ENCODE measurements at regions of chr6 and their contacts with region 1.

Region 1: GRCh38 chr6:151014404-151015100 is 149.1 kb downstream of the MTHFD1L start:
- DNase-seq: peak; percentile 63 to 69
- ATAC-seq: peak; percentile 96

Region 2: GRCh38 chr6:150891888-150892485 is 122.6 kb before region 1 on chr6:
- intact Hi-C with region 1: loop called in 1 of 2 experiments (anchors 10 kb)
- DNase-seq: peak; percentile 31 to 72
- ATAC-seq: peak; percentile 71

Region 3: DNA sequence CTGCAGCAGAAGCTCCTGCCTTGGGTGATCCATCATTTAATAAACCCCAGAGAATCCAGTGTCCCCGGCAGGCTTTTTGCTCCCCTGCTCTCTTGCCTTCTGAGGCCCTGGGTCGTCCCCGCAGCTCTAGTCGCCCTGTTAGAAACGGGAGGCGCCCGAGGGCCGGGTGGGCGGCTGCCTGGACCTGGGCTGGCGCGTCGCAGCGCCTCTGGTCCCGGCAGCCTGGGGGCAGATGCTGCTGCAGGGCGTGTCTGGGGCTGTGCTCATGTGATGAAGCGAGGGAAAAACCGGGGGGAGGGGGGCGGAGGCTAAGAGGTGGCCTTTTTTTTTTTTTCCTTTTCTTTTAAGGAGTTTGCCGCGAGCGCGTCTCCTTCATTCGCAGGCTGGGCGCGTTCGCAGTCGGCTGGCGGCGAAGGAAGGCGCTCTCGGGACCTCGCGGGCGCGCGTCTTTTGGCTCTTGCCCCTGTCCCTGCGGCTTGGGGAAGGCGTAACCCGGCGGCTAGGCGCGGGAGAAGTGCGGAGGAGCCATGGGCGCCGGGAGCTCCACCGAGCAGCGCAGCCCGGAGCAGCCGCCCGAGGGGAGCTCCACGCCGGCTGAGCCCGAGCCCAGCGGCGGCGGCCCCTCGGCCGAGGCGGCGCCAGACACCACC is 225.6 kb after region 1 on chr6:
- intact Hi-C with region 1: loop called in 1 of 2 experiments (anchors 10 kb)
- DNase-seq: peak; percentile 60 to 79
- ATAC-seq: peak; percentile 39

Region 4: GRCh38 chr6:151323791-151324487 is 309.4 kb after region 1 on chr6:
- intact Hi-C with region 1: loop called in 1 of 2 experiments (anchors 5 kb)
- DNase-seq: peak; percentile 68 to 74
- ATAC-seq: peak; percentile 84

Region 5: DNA sequence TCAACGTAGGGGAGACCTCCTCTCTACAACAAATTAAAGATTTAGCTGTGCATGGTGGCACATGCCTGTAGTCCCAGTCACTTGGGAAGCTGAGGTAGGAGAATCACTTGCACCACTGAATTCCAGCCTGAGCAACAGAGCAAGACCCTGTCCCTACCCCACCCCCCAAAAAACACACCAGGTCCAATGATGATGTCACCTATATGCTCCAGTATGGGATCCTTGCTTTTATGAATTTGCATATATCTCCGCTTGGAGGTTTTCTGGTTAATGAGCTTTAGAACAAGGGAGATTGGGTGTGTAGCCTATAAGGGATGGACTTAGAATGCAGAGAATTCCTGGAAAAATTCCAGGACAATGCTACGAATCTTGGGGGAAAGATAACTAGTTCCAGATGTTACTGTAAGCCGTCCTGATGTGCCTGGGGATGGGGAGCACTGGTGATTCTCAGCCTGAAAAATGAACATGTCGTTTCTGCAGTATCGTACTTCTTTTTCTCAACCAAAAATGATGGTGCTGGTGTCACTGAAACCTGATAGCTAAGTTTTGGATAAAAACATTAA is 315.7 kb after region 1 on chr6:
- intact Hi-C with region 1: loop called in 1 of 2 experiments (anchors 10 kb)
- DNase-seq: no peak
- ATAC-seq: no peak

Measured in left colon (tissue), 2 donors.